ENCODE measurements at regions of chr1 and their contacts with region 1.

Region 1: GRCh38 chr1:53182111-53182593 is 14.5 kb upstream of the CPT2 start:
- DNase-seq: peak; percentile 89
- ATAC-seq: peak; percentile 87
- H3K4me3 Mint-ChIP-seq: no peak overlapping the region
- H3K27ac Mint-ChIP-seq: no peak overlapping the region
- H3K4me1 Mint-ChIP-seq: no peaks in the 10 kb centered on the region
- H3K27me3 Mint-ChIP-seq: peaks cover 13% of the 10 kb centered on the region

Region 2: GRCh38 chr1:53196485-53197270 is 14.5 kb after region 1 on chr1 and contains the start of gene CPT2:
- CTCF ChIA-PET with region 1: interaction called, 34 read pairs
- POLR2A ChIA-PET with region 1: interaction called, 4 read pairs
- DNase-seq: peak; percentile 95
- ATAC-seq: peak; percentile 99
- H3K4me3 Mint-ChIP-seq: peak within 1 kb of the TSS; percentile 85
- H3K27ac Mint-ChIP-seq: peak within 1 kb of the TSS; percentile 97
- H3K4me1 Mint-ChIP-seq: peaks cover 27% of the 10 kb centered on the region
- H3K27me3 Mint-ChIP-seq: no peaks in the 10 kb centered on the region
- total RNA-seq, gene CPT2: 11.6 to 12.7 TPM

Region 3: GRCh38 chr1:53616927-53617326 is 434.8 kb after region 1 on chr1:
- CTCF ChIA-PET with region 1: no interaction called
- POLR2A ChIA-PET with region 1: no interaction called
- DNase-seq: no peak
- ATAC-seq: no peak
- H3K4me3 Mint-ChIP-seq: no peak overlapping the region
- H3K27ac Mint-ChIP-seq: no peak overlapping the region
- H3K4me1 Mint-ChIP-seq: no peaks in the 10 kb centered on the region
- H3K27me3 Mint-ChIP-seq: peaks cover 2% of the 10 kb centered on the region

Region 4: DNA sequence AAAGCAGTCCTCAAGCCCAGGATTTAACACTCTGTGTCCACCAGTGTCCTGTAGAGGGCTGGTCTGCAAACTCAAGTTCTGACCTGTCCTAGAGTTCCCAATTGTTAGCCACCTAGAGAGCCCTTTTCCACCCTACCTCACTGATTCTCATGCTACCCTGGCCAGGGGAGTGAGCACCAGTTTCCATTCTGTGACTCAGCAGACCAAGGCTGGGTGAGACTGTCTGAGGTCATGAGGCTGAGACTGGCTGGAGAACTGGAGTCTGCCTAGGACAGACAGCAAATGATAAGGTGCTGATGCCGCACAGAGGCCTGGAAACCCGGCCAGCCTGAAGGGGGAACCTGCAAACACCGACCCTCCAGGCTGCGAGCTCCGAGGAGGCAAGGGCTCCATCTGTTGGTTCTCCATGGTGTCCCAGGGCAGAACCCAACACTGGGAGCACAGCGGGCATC is 543.1 kb after region 1 on chr1:
- CTCF ChIA-PET with region 1: no interaction called
- POLR2A ChIA-PET with region 1: no interaction called
- DNase-seq: no peak
- ATAC-seq: no peak
- H3K4me3 Mint-ChIP-seq: no peak overlapping the region
- H3K27ac Mint-ChIP-seq: no peak overlapping the region
- H3K4me1 Mint-ChIP-seq: no peaks in the 10 kb centered on the region
- H3K27me3 Mint-ChIP-seq: peaks cover 2% of the 10 kb centered on the region